Heart left ventricle (tissue), 16 donors: ENCODE measurements at regions of chr18 and their contacts with region 1.

Region 1: DNA sequence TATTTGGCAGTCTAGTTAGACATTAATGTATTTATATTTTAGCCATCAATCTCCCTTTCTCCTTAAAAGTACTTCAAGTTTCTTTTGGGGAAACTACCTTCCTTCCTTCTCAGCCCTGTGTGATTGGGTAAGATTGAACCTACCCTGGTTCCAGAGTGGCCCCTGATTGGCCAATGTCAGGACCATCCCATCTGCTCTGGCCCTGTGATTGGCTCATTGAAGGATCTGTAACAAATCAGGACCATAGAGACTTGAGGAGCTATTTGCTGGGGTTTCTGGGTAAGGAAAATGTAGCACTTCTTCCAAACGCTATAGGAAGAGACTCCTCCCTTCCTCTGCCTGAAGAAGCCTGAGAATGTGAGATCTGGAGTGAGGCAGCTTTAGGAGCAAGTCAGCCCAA is 59.3 kb downstream of the AQP4 start:
- DNase-seq: no peak
- ATAC-seq: no peak
- H3K4me3 ChIP-seq: no peak overlapping the region
- H3K27ac ChIP-seq: no peak overlapping the region
- H3K4me1 ChIP-seq: no peaks in the 10 kb centered on the region
- H3K27me3 ChIP-seq: peaks cover 0 to 6% (median 0%) of the 10 kb centered on the region in 9 donors
- CTCF ChIP-seq: no peak
- POLR2A ChIP-seq: no peak

Region 2: GRCh38 chr18:26840965-26841364 is 34.7 kb after region 1 on chr18:
- intact Hi-C with region 1: loop called in 1 of 10 experiments (anchors 2 kb)
- DNase-seq: no peak
- ATAC-seq: no peak
- H3K4me3 ChIP-seq: no peak overlapping the region
- H3K27ac ChIP-seq: no peak overlapping the region
- H3K4me1 ChIP-seq: peaks cover 0 to under 1% (median 0%) of the 10 kb centered on the region in 12 donors
- H3K27me3 ChIP-seq: no peaks in the 10 kb centered on the region
- CTCF ChIP-seq: no peak
- POLR2A ChIP-seq: no peak

Region 3: DNA sequence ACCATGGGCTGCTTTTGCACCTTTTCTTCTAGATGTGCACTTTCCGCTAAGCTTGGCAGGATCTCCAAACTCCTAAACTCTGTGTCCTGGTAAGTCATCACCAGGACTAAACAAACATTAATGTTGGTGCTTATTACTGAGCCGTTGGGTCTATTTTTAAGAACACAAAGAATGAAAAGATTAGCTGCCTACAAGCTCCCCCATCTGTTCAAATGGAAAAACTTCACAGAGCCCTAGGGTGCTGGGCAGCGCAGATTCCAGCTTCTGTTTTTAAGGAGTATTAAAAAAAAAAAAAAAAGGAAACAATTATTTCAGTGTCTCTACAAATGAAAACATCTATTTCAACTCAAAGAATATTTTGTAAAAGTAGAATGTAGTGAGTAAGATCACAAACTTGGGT is 157.1 kb after region 1 on chr18:
- intact Hi-C with region 1: loop called in 7 of 10 experiments (anchors 5 to 10 kb)
- DNase-seq: no peak
- ATAC-seq: peak in 3 of 4 donors; percentile 52 to 56 (median 54)
- H3K4me3 ChIP-seq: no peak overlapping the region
- H3K27ac ChIP-seq: no peak overlapping the region
- H3K4me1 ChIP-seq: peaks cover 0 to 9% (median 0%) of the 10 kb centered on the region in 12 donors
- H3K27me3 ChIP-seq: no peaks in the 10 kb centered on the region
- CTCF ChIP-seq: peak; percentile 9 to 51 (median 35)
- POLR2A ChIP-seq: no peak